OCI-LY7 (cell line): ENCODE measurements at regions of chr3 and their contacts with region 1.

Region 1: DNA sequence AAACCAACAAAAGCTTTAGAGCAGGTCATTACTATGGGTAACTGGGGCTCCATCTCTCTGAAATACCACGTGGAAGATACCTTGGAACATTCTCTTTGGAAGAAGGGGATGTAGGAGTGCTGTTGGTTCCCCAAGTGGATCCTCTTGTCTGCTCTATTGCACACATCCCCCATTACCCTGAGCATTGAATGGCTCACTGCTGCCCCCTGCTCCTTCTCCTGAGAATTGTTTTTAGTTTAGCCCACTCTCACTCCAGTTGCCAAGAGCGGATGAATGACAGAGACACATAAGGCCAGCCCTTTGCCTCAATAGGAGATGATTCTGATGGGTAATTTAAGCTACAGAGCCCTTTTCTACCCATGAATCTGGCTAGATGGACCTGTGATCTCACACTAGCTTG is 135.6 kb upstream of the SUCLG2 start:
- DNase-seq: peak; percentile 54
- H3K4me3 ChIP-seq: no peak overlapping the region
- H3K27ac ChIP-seq: no peak overlapping the region
- H3K4me1 ChIP-seq: no peaks in the 10 kb centered on the region
- CTCF ChIP-seq: peak; percentile 84

Region 2: GRCh38 chr3:67113802-67114407 is 676.1 kb before region 1 on chr3:
- CTCF ChIA-PET with region 1: no interaction called
- POLR2A ChIA-PET with region 1: no interaction called
- intact Hi-C with region 1: loop called (anchors 2 kb)
- DNase-seq: peak; percentile 80
- H3K4me3 ChIP-seq: no peak overlapping the region
- H3K27ac ChIP-seq: no peak overlapping the region
- H3K4me1 ChIP-seq: no peaks in the 10 kb centered on the region
- CTCF ChIP-seq: peak; percentile 99

Region 3: DNA sequence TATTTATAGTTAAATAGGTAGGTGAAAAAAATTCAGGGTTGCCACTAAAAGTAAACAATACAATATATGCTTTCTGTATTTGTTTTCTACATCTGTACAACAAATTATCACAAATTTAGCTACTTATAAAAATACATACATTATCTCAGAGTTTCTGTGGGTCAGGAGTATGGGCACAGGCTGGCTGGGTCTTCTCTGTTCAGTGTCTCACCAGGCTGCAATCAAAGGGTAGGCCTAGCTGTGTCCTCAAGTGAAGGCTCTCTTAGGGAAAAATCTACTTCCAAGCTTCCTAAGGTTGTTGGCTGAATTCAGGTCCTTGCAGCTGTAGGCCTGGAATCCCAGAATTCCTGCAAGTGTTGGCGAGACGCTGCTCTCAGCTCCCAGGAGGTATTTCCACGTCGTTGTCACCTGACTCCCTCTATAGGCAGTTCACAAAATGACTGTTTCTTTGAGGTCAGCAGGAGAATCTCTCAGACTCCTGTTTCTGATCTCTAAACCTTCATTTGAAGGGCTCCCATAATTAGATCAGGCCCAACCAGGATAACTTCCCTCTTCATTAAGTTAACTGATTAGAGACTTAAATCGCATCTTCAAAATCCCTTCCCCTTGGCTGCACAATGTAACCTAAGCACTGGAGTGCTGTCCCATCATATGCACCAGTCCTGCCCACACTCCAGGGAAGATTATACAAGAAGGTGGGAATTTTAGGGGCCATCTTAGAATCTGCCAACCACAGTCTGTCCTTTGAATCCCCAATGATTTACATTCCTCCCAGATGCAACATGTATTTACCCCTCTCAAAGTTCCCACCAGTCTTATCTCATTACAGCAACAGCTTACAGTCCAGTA is 432.2 kb before region 1 on chr3:
- CTCF ChIA-PET with region 1: no interaction called
- POLR2A ChIA-PET with region 1: no interaction called
- intact Hi-C with region 1: no loop called
- DNase-seq: peak; percentile 25
- H3K4me3 ChIP-seq: no peak overlapping the region
- H3K27ac ChIP-seq: no peak overlapping the region
- H3K4me1 ChIP-seq: no peaks in the 10 kb centered on the region
- CTCF ChIP-seq: peak; percentile 76

Region 4: GRCh38 chr3:67384760-67385397 is 405.2 kb before region 1 on chr3:
- CTCF ChIA-PET with region 1: interaction called, 3 read pairs
- POLR2A ChIA-PET with region 1: interaction called, 3 read pairs
- intact Hi-C with region 1: loop called (anchors 1 kb)
- DNase-seq: peak; percentile 63
- H3K4me3 ChIP-seq: no peak overlapping the region
- H3K27ac ChIP-seq: no peak overlapping the region
- H3K4me1 ChIP-seq: peaks cover 8% of the 10 kb centered on the region
- CTCF ChIP-seq: peak; percentile 85

Region 5: GRCh38 chr3:67593761-67594244 is 196.2 kb before region 1 on chr3:
- CTCF ChIA-PET with region 1: no interaction called
- POLR2A ChIA-PET with region 1: no interaction called
- intact Hi-C with region 1: loop called (anchors 2 kb)
- DNase-seq: peak; percentile 18
- H3K4me3 ChIP-seq: no peak overlapping the region
- H3K27ac ChIP-seq: no peak overlapping the region
- H3K4me1 ChIP-seq: peaks cover 8% of the 10 kb centered on the region
- CTCF ChIP-seq: peak; percentile 55; the same call in 1 of the 2 replicates